ENCODE measurements at regions of chr10 and their contacts with region 1.

Region 1: GRCh38 chr10:76190634-76191270 is 759.3 kb downstream of the LRMDA start:
- DNase-seq: no peak
- ATAC-seq: no peak
- H3K4me3 ChIP-seq: no peak overlapping the region
- H3K27ac ChIP-seq: no peak overlapping the region
- H3K4me1 ChIP-seq: no peaks in the 10 kb centered on the region
- H3K27me3 ChIP-seq: peaks cover 90% of the 10 kb centered on the region
- CTCF ChIP-seq: no peak

Region 2: GRCh38 chr10:76113959-76114358 is 76.8 kb before region 1 on chr10:
- CTCF ChIA-PET with region 1: no interaction called
- POLR2A ChIA-PET with region 1: no interaction called
- intact Hi-C with region 1: loop called (anchors 1 kb)
- DNase-seq: peak; percentile 98
- ATAC-seq: peak; percentile 76
- H3K4me3 ChIP-seq: peak overlapping the region; percentile 0; the same call in 1 of the 2 replicates
- H3K27ac ChIP-seq: peak overlapping the region; percentile 23
- H3K4me1 ChIP-seq: peaks cover 41% of the 10 kb centered on the region
- H3K27me3 ChIP-seq: peaks cover 51% of the 10 kb centered on the region
- CTCF ChIP-seq: no peak

Region 3: GRCh38 chr10:76547352-76547972 is 356.7 kb after region 1 on chr10:
- CTCF ChIA-PET with region 1: no interaction called
- POLR2A ChIA-PET with region 1: no interaction called
- intact Hi-C with region 1: loop called (anchors 2 kb)
- DNase-seq: peak; percentile 100
- ATAC-seq: peak; percentile 85
- H3K4me3 ChIP-seq: peak overlapping the region; percentile 44
- H3K27ac ChIP-seq: no peak overlapping the region
- H3K4me1 ChIP-seq: peaks cover 5% of the 10 kb centered on the region
- H3K27me3 ChIP-seq: peaks cover 26% of the 10 kb centered on the region
- CTCF ChIP-seq: peak; percentile 100

Region 4: GRCh38 chr10:76925636-76926405 is 735.1 kb after region 1 on chr10:
- CTCF ChIA-PET with region 1: no interaction called
- POLR2A ChIA-PET with region 1: no interaction called
- intact Hi-C with region 1: no loop called
- DNase-seq: no peak
- ATAC-seq: no peak
- H3K4me3 ChIP-seq: no peak overlapping the region
- H3K27ac ChIP-seq: no peak overlapping the region
- H3K4me1 ChIP-seq: no peaks in the 10 kb centered on the region
- H3K27me3 ChIP-seq: no peaks in the 10 kb centered on the region
- CTCF ChIP-seq: no peak

Measured in PC-3 (cell line).